CD4-positive, alpha-beta memory T cell (primary cell): ENCODE measurements at regions of chr21 and their contacts with region 1.

Region 1: DNA sequence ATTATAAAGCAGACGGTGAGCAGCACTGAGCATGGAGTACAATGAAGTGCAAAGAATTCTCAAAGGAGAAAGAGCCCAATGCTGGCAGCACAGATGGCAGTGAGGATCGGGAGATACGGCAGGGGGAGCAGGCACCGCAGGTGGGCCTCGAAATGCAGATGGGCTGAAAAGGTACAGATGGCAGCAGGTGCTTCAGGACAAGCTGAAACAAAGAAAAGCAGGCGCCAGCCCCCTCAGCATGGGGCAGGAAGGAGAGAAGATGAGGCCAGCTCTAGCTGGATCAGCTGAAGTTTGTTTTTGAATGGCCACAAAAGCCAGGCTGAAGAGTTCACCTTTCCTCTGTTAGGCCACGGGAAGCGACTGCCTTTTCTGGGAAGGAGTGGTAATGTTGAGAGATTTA is 7.7 kb downstream of the CFAP298 start:
- DNase-seq: no peak
- H3K4me3 ChIP-seq: no peak overlapping the region
- H3K4me3 Mint-ChIP-seq: no peak overlapping the region
- H3K27ac ChIP-seq: no peak overlapping the region
- H3K27ac Mint-ChIP-seq: peak overlapping the region in 1 of 7 donors; percentile 57
- H3K4me1 ChIP-seq: no peaks in the 10 kb centered on the region
- H3K4me1 Mint-ChIP-seq: peaks cover 0 to 11% (median 7%) of the 10 kb centered on the region in 4 donors
- H3K27me3 ChIP-seq: no peaks in the 10 kb centered on the region
- H3K27me3 Mint-ChIP-seq: no peaks in the 10 kb centered on the region

Region 2: DNA sequence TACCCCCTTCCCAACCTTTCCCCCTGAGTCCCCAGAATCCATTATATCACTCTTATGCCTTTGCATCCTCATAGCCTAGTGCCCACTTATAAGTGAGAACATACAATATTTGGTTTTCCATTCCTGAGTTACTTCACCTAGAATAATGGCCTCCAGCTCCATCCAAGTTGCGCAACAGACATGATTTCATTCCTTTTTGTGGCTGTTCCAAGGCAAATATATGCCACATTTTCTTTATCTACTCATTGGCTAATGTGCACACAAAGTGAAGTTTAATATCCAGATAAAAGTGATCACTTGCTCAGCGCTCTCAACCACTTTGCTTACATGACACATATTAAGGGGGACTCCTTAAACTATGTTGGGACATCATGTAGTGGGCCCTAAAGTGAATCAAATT is 1188.0 kb before region 1 on chr21:
- CTCF ChIA-PET with region 1: no interaction called
- POLR2A ChIA-PET with region 1: no interaction called
- intact Hi-C with region 1: no loop called
- DNase-seq: no peak
- H3K4me3 ChIP-seq: no peak overlapping the region
- H3K4me3 Mint-ChIP-seq: no peak overlapping the region
- H3K27ac ChIP-seq: no peak overlapping the region
- H3K27ac Mint-ChIP-seq: no peak overlapping the region
- H3K4me1 ChIP-seq: no peaks in the 10 kb centered on the region
- H3K4me1 Mint-ChIP-seq: peaks cover 0 to 4% (median under 1%) of the 10 kb centered on the region in 4 donors
- H3K27me3 ChIP-seq: no peaks in the 10 kb centered on the region
- H3K27me3 Mint-ChIP-seq: no peaks in the 10 kb centered on the region

Region 3: GRCh38 chr21:31781737-31782136 is 822.7 kb before region 1 on chr21:
- CTCF ChIA-PET with region 1: interaction called, 7 read pairs
- POLR2A ChIA-PET with region 1: no interaction called
- intact Hi-C with region 1: loop called (anchors 5 kb)
- DNase-seq: no peak
- H3K4me3 ChIP-seq: no peak overlapping the region
- H3K4me3 Mint-ChIP-seq: no peak overlapping the region
- H3K27ac ChIP-seq: no peak overlapping the region
- H3K27ac Mint-ChIP-seq: no peak overlapping the region
- H3K4me1 ChIP-seq: no peaks in the 10 kb centered on the region
- H3K4me1 Mint-ChIP-seq: peaks cover 0 to 9% (median 5%) of the 10 kb centered on the region in 4 donors
- H3K27me3 ChIP-seq: no peaks in the 10 kb centered on the region
- H3K27me3 Mint-ChIP-seq: peaks cover 2 to 12% of the 10 kb centered on the region in 2 donors

Region 4: GRCh38 chr21:31866077-31866511 is 738.4 kb before region 1 on chr21:
- CTCF ChIA-PET with region 1: interaction called, 14 read pairs
- POLR2A ChIA-PET with region 1: no interaction called
- intact Hi-C with region 1: loop called (anchors 2 kb)
- DNase-seq: peak; percentile 31 to 40 (median 36)
- H3K4me3 ChIP-seq: no peak overlapping the region
- H3K4me3 Mint-ChIP-seq: no peak overlapping the region
- H3K27ac ChIP-seq: no peak overlapping the region
- H3K27ac Mint-ChIP-seq: no peak overlapping the region
- H3K4me1 ChIP-seq: no peaks in the 10 kb centered on the region
- H3K4me1 Mint-ChIP-seq: peaks cover 0 to 6% (median 0%) of the 10 kb centered on the region in 4 donors
- H3K27me3 ChIP-seq: peaks cover 8% of the 10 kb centered on the region
- H3K27me3 Mint-ChIP-seq: peaks cover 14 to 23% of the 10 kb centered on the region in 2 donors

Region 5: GRCh38 chr21:32364387-32364786 is 240.1 kb before region 1 on chr21:
- CTCF ChIA-PET with region 1: interaction called, 14 read pairs
- POLR2A ChIA-PET with region 1: no interaction called
- intact Hi-C with region 1: no loop called
- DNase-seq: no peak
- H3K4me3 ChIP-seq: no peak overlapping the region
- H3K4me3 Mint-ChIP-seq: no peak overlapping the region
- H3K27ac ChIP-seq: no peak overlapping the region
- H3K27ac Mint-ChIP-seq: peak overlapping the region in 2 of 7 donors; percentile 67 to 78
- H3K4me1 ChIP-seq: no peaks in the 10 kb centered on the region
- H3K4me1 Mint-ChIP-seq: peaks cover 0 to 2% (median 0%) of the 10 kb centered on the region in 4 donors
- H3K27me3 ChIP-seq: no peaks in the 10 kb centered on the region
- H3K27me3 Mint-ChIP-seq: no peaks in the 10 kb centered on the region

Region 6: DNA sequence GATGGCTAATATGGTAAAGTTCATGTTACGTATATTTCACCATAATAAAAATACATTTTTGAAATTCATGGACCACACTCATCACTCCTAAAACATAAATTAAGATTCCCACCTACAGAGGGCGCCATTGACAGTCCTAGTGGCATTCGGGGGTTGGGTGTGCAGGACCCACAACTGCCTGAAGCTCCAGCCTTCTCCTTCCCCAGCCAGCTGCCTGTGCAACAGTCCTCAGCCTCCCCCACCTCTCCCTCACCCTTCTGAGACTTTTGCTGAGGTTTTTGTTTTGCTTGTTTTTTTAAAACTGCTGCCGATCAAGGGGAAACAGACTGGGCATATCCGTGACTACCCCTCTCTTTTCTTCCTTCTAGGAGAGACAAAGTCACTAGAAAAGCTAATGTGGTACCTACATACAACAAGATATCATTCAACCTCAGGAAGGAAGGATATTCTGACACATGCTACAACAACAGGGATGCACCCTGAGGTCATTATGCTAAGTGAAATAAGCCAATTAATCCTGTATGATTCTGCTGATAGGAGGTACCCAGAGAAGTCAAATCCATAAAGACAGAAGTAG is 201.2 kb before region 1 on chr21:
- CTCF ChIA-PET with region 1: interaction called, 160 read pairs
- POLR2A ChIA-PET with region 1: interaction called, 5 read pairs
- intact Hi-C with region 1: loop called (anchors 1 kb)
- DNase-seq: peak; percentile 63 to 68 (median 65)
- H3K4me3 ChIP-seq: no peak overlapping the region
- H3K4me3 Mint-ChIP-seq: no peak overlapping the region
- H3K27ac ChIP-seq: no peak overlapping the region
- H3K27ac Mint-ChIP-seq: peak overlapping the region in 2 of 7 donors; percentile 7 to 27
- H3K4me1 ChIP-seq: no peaks in the 10 kb centered on the region
- H3K4me1 Mint-ChIP-seq: peaks cover 4 to 21% (median 6%) of the 10 kb centered on the region in 4 donors
- H3K27me3 ChIP-seq: peaks cover 9% of the 10 kb centered on the region
- H3K27me3 Mint-ChIP-seq: peaks cover 1 to 7% of the 10 kb centered on the region in 2 donors

Region 7: DNA sequence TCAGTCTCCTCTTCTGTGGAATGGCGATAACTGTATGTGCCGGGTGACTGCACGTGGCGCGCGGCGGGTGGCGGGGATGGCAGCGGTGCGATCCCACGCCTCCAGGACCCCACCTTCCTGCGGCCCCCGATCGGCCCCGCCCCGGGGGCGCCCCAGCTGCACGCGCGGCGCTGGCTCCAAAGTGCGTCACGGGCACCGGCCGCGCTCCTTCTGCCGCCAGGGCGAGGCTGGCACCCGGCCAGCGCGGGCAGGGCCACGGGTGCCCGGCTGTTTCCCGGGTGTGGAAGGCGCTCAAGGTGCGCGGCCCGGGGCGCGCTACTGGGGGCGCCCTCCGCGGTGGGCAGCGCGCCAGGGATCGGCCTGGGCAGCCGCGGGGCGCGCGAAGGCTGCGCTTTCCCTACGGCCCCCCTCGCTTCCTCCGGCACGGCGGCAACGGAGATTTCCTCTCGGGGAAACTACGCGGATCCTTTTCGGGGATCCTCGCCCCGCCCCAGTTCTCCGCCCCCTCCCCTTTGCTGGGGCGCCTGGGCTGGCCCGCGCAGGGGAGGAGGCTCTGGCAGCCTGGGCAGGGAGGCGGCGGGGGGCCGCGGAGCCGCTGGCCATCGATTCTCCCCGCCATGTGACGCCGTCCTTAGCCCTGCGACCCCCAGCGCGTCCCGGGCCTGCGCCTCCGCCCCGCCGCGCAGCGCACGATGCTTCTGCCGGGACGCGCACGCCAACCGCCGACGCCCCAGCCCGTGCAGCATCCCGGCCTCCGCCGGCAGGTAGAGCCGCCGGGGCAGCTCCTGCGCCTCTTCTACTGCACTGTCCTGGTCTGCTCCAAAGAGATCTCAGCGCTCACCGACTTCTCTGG is 192.1 kb before region 1 on chr21 and contains the start of gene EVA1C:
- CTCF ChIA-PET with region 1: interaction called, 160 read pairs
- POLR2A ChIA-PET with region 1: interaction called, 12 read pairs
- intact Hi-C with region 1: no loop called
- DNase-seq: peak; percentile 81 to 87 (median 85)
- H3K4me3 ChIP-seq: peak within 1 kb of the TSS; percentile 40 to 83
- H3K4me3 Mint-ChIP-seq: peak within 1 kb of the TSS; percentile 94 to 98 (median 96)
- H3K27ac ChIP-seq: peak within 1 kb of the TSS; percentile 86
- H3K27ac Mint-ChIP-seq: peak within 1 kb of the TSS; percentile 95 to 99 (median 97)
- H3K4me1 ChIP-seq: peaks cover 34% of the 10 kb centered on the region
- H3K4me1 Mint-ChIP-seq: peaks cover 32 to 71% (median 43%) of the 10 kb centered on the region in 4 donors
- H3K27me3 ChIP-seq: no peaks in the 10 kb centered on the region
- H3K27me3 Mint-ChIP-seq: no peaks in the 10 kb centered on the region
- total RNA-seq, gene EVA1C: 17.1 to 17.2 TPM